ENCODE measurements at regions of chr7 and their contacts with region 1.

Region 1: DNA sequence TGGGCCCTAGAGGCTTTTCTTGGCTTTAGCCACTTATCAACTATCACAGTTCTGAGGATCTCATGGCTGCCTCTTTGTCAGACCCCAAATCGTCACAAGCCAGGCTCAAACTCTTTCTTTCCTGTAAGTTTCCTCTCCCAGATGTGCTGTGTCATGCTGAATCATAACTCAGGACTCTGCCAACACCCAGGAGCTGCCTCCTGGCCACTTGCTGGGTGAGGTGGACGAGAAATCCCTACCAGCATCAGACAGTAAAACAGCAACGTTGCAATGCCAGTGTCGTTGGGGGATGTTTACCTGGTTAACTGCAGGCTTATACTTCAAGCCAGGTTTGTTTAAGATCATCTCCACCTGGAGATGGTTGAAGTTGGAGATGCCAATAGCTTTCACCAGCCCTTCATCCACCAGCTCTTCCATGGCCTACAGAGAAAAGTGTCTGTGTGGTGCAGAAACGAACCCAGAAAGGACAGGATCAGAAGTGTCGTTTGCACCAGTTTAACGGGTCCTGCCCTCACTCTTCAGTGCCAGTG is 10.1 kb downstream of the AKR1B1 start:
- DNase-seq: no peak
- ATAC-seq: no peak
- H3K4me3 Mint-ChIP-seq: no peak overlapping the region
- H3K27ac Mint-ChIP-seq: no peak overlapping the region
- H3K4me1 Mint-ChIP-seq: peaks cover 6% of the 10 kb centered on the region
- H3K27me3 Mint-ChIP-seq: no peaks in the 10 kb centered on the region
- CTCF ChIP-seq: no peak

Region 2: GRCh38 chr7:134084488-134085144 is 364.1 kb before region 1 on chr7:
- CTCF ChIA-PET with region 1: no interaction called
- POLR2A ChIA-PET with region 1: no interaction called
- intact Hi-C with region 1: no loop called
- DNase-seq: no peak
- ATAC-seq: no peak
- H3K4me3 Mint-ChIP-seq: no peak overlapping the region
- H3K27ac Mint-ChIP-seq: no peak overlapping the region
- H3K4me1 Mint-ChIP-seq: no peaks in the 10 kb centered on the region
- H3K27me3 Mint-ChIP-seq: no peaks in the 10 kb centered on the region
- CTCF ChIP-seq: no peak

Region 3: GRCh38 chr7:134290286-134290685 is 158.5 kb before region 1 on chr7:
- CTCF ChIA-PET with region 1: no interaction called
- POLR2A ChIA-PET with region 1: no interaction called
- intact Hi-C with region 1: no loop called
- DNase-seq: no peak
- ATAC-seq: no peak
- H3K4me3 Mint-ChIP-seq: no peak overlapping the region
- H3K27ac Mint-ChIP-seq: no peak overlapping the region
- H3K4me1 Mint-ChIP-seq: no peaks in the 10 kb centered on the region
- H3K27me3 Mint-ChIP-seq: no peaks in the 10 kb centered on the region
- CTCF ChIP-seq: no peak

Region 4: GRCh38 chr7:134388336-134389019 is 60.3 kb before region 1 on chr7:
- CTCF ChIA-PET with region 1: no interaction called
- POLR2A ChIA-PET with region 1: no interaction called
- intact Hi-C with region 1: no loop called
- DNase-seq: no peak
- ATAC-seq: no peak
- H3K4me3 Mint-ChIP-seq: no peak overlapping the region
- H3K27ac Mint-ChIP-seq: no peak overlapping the region
- H3K4me1 Mint-ChIP-seq: no peaks in the 10 kb centered on the region
- H3K27me3 Mint-ChIP-seq: peaks cover 1% of the 10 kb centered on the region
- CTCF ChIP-seq: no peak

Region 5: GRCh38 chr7:134458806-134459698 is 10.3 kb after region 1 on chr7 and contains the start of gene AKR1B1:
- CTCF ChIA-PET with region 1: interaction called, 29 read pairs
- POLR2A ChIA-PET with region 1: no interaction called
- intact Hi-C with region 1: no loop called
- DNase-seq: peak; percentile 94
- ATAC-seq: peak; percentile 92
- H3K4me3 Mint-ChIP-seq: peak within 1 kb of the TSS; percentile 85
- H3K27ac Mint-ChIP-seq: peak within 1 kb of the TSS; percentile 78
- H3K4me1 Mint-ChIP-seq: peaks cover 46% of the 10 kb centered on the region
- H3K27me3 Mint-ChIP-seq: no peaks in the 10 kb centered on the region
- CTCF ChIP-seq: peak; percentile 50
- total RNA-seq, gene AKR1B1: 106 to 108 TPM